IMR-90 (cell line): ENCODE measurements at regions of chr6 and their contacts with region 1.

Region 1: GRCh38 chr6:140537819-140538705 is 1163.6 kb upstream of the CITED2 start:
- DNase-seq: peak; percentile 98
- ATAC-seq: peak; percentile 98
- H3K4me3 ChIP-seq: no peak overlapping the region
- H3K27ac ChIP-seq: peak overlapping the region; percentile 98
- H3K4me1 ChIP-seq: peaks cover 4% of the 10 kb centered on the region
- H3K27me3 ChIP-seq: no peaks in the 10 kb centered on the region
- CTCF ChIP-seq: no peak
- POLR2A ChIP-seq: peak; percentile 31; the same call in 1 of the 2 replicates
- RAD21 ChIP-seq: peak; percentile 17; the same call in 1 of the 2 replicates

Region 2: GRCh38 chr6:139369568-139370282 is 1168.3 kb before region 1 on chr6:
- CTCF ChIA-PET with region 1: no interaction called
- POLR2A ChIA-PET with region 1: interaction called, 3 read pairs
- dilution Hi-C with region 1: no loop called
- in situ Hi-C with region 1: no loop called
- intact Hi-C with region 1: loop called (anchors 1 kb)
- DNase-seq: peak; percentile 80
- ATAC-seq: 0 out of 2 replicates have a peak, but pooled peaks have one; percentile 2
- H3K4me3 ChIP-seq: no peak overlapping the region
- H3K27ac ChIP-seq: no peak overlapping the region
- H3K4me1 ChIP-seq: peaks cover 7% of the 10 kb centered on the region
- H3K27me3 ChIP-seq: no peaks in the 10 kb centered on the region
- CTCF ChIP-seq: peak; percentile 76
- POLR2A ChIP-seq: 0 out of 2 replicates have a peak, but pooled peaks have one; percentile 33
- RAD21 ChIP-seq: peak; percentile 89

Region 3: DNA sequence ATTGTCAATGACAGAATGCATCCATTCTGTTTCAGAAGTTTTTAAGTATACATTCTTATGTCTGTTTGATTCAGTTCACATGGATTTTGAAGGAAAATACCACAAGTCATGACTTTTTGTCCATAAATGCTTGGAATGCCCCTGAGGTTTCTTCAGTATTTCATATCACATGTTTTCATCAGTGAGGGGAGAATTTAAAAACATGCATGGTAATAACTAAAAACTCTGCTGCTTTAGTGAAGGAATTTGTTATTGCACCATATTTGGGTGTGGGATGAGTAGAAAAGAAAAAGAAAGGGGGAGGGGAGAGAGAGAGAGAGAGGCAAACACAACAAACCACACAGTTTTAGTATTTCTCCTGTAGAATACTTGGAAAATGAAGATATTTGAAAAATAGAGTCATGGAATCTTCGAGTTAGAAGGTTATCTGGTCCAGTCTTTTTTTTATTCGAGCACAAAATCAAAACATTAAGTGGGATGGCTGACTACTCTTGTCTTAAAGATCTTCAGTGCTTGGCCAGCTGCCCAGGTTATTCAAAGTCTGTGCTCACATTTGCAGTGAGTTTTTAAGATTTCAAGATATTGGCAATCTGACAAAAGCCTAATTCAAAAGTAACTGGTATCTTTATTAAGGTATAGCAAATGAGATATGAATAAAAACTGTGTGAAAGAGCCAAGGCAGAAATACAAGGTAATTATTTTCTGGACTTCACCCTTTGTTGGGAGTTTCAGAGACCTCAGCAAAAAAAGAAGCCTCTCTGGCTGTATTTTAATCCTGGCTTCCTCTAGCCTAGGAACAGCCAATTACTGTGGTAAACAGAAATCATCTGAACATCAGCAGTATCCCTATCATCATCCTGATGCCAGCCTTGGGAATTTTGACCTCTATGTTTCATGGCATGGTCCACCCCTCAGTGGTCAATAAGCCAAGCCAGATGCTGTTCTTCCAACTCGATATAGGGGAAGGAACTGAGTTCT is 475.7 kb before region 1 on chr6:
- CTCF ChIA-PET with region 1: no interaction called
- POLR2A ChIA-PET with region 1: no interaction called
- dilution Hi-C with region 1: no loop called
- in situ Hi-C with region 1: no loop called
- intact Hi-C with region 1: loop called (anchors 5 kb)
- DNase-seq: peak; percentile 96
- ATAC-seq: peak; percentile 80
- H3K4me3 ChIP-seq: no peak overlapping the region
- H3K27ac ChIP-seq: peak overlapping the region; percentile 100
- H3K4me1 ChIP-seq: peaks cover 15% of the 10 kb centered on the region
- H3K27me3 ChIP-seq: no peaks in the 10 kb centered on the region
- CTCF ChIP-seq: no peak
- POLR2A ChIP-seq: no peak
- RAD21 ChIP-seq: 0 out of 2 replicates have a peak, but pooled peaks have one; percentile 15

Region 4: GRCh38 chr6:140380427-140381218 is 157.4 kb before region 1 on chr6:
- CTCF ChIA-PET with region 1: no interaction called
- POLR2A ChIA-PET with region 1: no interaction called
- dilution Hi-C with region 1: no loop called
- in situ Hi-C with region 1: no loop called
- intact Hi-C with region 1: loop called (anchors 5 kb)
- DNase-seq: peak; percentile 50
- ATAC-seq: peak; percentile 25
- H3K4me3 ChIP-seq: no peak overlapping the region
- H3K27ac ChIP-seq: peak overlapping the region; percentile 83
- H3K4me1 ChIP-seq: peaks cover 10% of the 10 kb centered on the region
- H3K27me3 ChIP-seq: no peaks in the 10 kb centered on the region
- CTCF ChIP-seq: no peak
- POLR2A ChIP-seq: no peak
- RAD21 ChIP-seq: no peak

Region 5: DNA sequence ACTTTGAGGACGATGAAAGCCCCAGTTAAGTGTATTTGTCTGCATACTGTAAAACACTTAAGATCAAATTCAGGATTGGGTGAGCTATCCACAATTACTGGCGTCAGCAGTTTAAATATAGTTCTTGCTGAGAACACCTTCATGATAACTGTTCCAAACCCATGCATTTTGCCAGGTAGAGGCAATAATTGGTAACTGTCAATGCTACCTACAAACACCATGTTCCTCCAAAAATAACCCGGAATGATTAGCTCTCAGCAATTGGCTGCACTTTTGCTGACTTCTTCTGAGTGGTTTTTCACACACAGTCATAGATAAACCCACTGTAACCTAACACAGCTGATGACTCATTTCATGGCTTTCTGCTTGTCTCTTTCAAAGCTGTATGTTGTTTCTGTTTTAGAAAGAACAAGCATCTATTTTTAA is 236.0 kb after region 1 on chr6:
- CTCF ChIA-PET with region 1: no interaction called
- POLR2A ChIA-PET with region 1: no interaction called
- dilution Hi-C with region 1: no loop called
- in situ Hi-C with region 1: no loop called
- intact Hi-C with region 1: no loop called
- DNase-seq: peak; percentile 91
- ATAC-seq: peak; percentile 96
- H3K4me3 ChIP-seq: no peak overlapping the region
- H3K27ac ChIP-seq: no peak overlapping the region
- H3K4me1 ChIP-seq: peaks cover 2% of the 10 kb centered on the region; the same call in 1 of the 2 replicates
- H3K27me3 ChIP-seq: no peaks in the 10 kb centered on the region
- CTCF ChIP-seq: no peak
- POLR2A ChIP-seq: no peak
- RAD21 ChIP-seq: no peak

Region 6: GRCh38 chr6:140921366-140922226 is 383.5 kb after region 1 on chr6:
- CTCF ChIA-PET with region 1: no interaction called
- POLR2A ChIA-PET with region 1: no interaction called
- dilution Hi-C with region 1: no loop called
- in situ Hi-C with region 1: no loop called
- intact Hi-C with region 1: loop called (anchors 1 kb)
- DNase-seq: peak; percentile 86
- ATAC-seq: peak; percentile 77
- H3K4me3 ChIP-seq: no peak overlapping the region
- H3K27ac ChIP-seq: no peak overlapping the region
- H3K4me1 ChIP-seq: no peaks in the 10 kb centered on the region; the same call in 1 of the 2 replicates
- H3K27me3 ChIP-seq: no peaks in the 10 kb centered on the region
- CTCF ChIP-seq: peak; percentile 87
- POLR2A ChIP-seq: peak; percentile 34; the same call in 1 of the 2 replicates
- RAD21 ChIP-seq: peak; percentile 94